ENCODE measurements at regions of chr2 and their contacts with region 1.

Region 1: DNA sequence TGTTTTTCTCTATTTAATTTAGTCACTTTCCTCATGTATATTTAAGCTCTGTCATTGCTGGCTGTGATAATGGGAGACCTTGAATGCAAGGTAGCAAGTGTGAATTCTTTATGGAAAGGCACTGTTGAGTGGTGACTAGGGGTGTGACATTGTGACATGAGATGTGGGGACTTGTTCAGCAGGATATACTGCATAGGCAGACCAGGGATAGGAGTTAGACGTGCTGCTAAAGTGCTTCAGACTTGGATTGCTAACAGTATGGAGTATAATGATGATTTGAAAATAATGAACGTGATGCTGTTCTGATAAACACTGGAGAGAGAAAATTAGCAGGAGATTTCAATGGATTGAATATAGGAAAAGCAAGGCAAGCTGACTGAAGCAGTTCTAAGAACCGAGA is 135.1 kb downstream of the NCOA1 start:
- DNase-seq: no peak
- H3K4me3 Mint-ChIP-seq: no peak overlapping the region
- H3K27ac Mint-ChIP-seq: no peak overlapping the region
- H3K4me1 Mint-ChIP-seq: no peaks in the 10 kb centered on the region
- H3K27me3 Mint-ChIP-seq: no peaks in the 10 kb centered on the region

Region 2: DNA sequence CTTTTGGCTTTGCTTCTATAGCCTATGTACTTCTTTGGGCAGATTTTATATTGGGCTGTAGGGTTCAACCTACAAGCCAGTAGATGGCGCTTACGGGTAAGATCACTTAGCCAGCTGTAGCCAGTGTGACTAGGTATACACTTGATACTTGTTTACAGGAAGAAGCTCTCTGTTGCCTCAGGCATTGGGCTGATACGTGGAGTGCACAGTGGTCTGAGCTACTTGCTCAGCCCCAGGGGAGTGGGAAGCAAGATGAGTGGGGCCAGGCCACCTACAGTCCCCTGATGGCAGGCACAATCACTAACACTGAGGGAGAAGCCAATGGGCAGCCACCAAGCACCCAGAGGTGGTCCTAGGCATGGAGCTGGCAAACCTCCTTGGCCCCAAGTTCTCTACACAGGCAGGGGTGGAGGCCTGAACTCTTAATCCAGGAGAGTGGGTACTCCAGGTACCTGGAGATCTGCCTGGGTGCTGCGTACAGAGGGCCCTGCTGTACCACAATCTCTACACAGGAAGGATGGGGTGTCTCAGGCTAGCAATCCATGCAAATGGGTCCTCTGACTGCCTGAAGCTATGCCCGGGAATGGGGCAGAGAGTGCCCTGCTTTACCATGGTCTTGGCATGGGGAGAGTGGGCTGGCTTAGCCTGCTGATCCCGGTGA is 12.8 kb before region 1 on chr2:
- CTCF ChIA-PET with region 1: interaction called, 13 read pairs
- POLR2A ChIA-PET with region 1: no interaction called
- DNase-seq: peak; percentile 60
- H3K4me3 Mint-ChIP-seq: no peak overlapping the region
- H3K27ac Mint-ChIP-seq: peak overlapping the region; percentile 79
- H3K4me1 Mint-ChIP-seq: peaks cover 11% of the 10 kb centered on the region
- H3K27me3 Mint-ChIP-seq: no peaks in the 10 kb centered on the region

Measured in activated CD4-positive, alpha-beta memory T cell treated with anti-CD3 and anti-CD28 coated beads, Interleukin-2, amount 10 ng/mL, durations not matched to agents 7 days and 5 days (primary cell).